Activated CD4-positive, alpha-beta memory T cell treated with anti-CD3 and anti-CD28 coated beads for 36 hours (primary cell): ENCODE measurements at regions of chr9 and their contacts with region 1.

Region 1: DNA sequence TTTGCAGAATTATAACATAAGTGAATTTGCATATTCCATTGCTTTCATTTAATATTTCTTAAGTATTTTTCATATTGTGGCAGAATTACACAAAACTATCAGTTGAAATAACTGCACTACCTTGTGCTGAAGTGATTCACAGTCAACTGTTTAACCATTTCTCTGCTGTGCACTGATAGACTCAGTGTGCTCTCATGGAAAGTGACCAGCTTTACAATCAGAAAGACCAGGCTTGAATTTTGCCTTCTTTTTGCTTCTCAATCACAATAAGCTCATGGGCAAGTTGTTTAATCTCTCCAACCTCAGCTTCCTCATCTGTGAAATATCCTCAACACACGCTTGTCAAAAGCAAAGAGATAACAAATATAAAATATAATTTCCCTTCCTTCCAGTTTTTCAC is 18.3 kb downstream of the CDK5RAP2 start:
- DNase-seq: no peak
- H3K4me3 Mint-ChIP-seq: no peak overlapping the region
- H3K27ac Mint-ChIP-seq: no peak overlapping the region
- H3K4me1 Mint-ChIP-seq: peaks cover 9% of the 10 kb centered on the region
- H3K27me3 Mint-ChIP-seq: no peaks in the 10 kb centered on the region

Region 2: GRCh38 chr9:120545701-120546550 is 15.8 kb before region 1 on chr9:
- CTCF ChIA-PET with region 1: no interaction called
- POLR2A ChIA-PET with region 1: no interaction called
- intact Hi-C with region 1: loop called (anchors 1 kb)
- DNase-seq: no peak
- H3K4me3 Mint-ChIP-seq: no peak overlapping the region
- H3K27ac Mint-ChIP-seq: no peak overlapping the region
- H3K4me1 Mint-ChIP-seq: no peaks in the 10 kb centered on the region
- H3K27me3 Mint-ChIP-seq: no peaks in the 10 kb centered on the region